ENCODE measurements at regions of chr1 and their contacts with region 1.

Region 1: DNA sequence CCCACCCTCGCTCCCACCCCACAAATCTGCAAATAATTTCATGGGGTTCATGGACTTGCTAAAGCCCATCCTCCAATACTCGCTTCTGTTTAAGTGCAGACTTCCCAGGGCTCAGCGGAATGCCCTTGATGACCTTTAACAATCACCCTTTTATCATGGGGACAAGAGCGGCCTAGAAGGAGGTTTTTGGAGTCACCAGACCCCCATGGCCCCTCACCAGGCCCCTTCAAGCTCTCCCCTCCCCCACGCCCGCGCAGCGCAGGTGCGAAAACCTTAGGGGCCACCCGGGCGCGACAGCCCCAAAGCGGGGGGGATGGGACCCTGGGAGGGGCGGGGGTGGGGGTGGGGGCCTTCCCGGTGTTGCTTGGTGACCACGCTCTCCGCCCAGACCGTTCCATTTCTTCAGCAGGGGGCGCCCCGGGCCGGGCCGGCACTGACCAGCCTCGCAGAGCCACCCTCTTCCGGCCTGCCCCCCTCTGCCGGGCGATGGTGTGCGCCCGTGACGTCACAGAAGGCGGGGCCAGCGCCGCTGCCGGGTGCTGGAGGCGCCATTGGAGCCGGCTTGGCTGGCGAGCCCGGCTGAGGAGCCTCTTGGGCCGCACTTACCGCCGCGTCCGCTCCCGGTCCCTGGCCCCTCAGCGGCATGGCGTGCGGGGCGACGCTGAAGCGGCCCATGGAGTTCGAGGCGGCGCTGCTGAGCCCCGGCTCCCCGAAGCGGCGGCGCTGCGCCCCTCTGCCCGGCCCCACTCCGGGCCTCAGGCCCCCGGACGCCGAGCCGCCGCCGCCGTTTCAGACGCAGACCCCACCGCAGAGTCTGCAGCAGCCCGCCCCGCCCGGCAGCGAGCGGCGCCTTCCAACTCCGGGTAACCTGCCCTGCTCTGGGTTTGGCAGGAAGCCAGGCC is at the start of gene AKIRIN1:
- DNase-seq: peak; percentile 94
- H3K4me3 ChIP-seq: peak within 1 kb of the TSS; percentile 69 to 83 (median 72)
- H3K27ac ChIP-seq: peak within 1 kb of the TSS; percentile 61
- H3K4me1 ChIP-seq: peaks cover 28% of the 10 kb centered on the region
- H3K27me3 ChIP-seq: no peaks in the 10 kb centered on the region
- CTCF ChIP-seq: no peak
- total RNA-seq, gene AKIRIN1: 62.8 to 63.5 TPM

Region 2: DNA sequence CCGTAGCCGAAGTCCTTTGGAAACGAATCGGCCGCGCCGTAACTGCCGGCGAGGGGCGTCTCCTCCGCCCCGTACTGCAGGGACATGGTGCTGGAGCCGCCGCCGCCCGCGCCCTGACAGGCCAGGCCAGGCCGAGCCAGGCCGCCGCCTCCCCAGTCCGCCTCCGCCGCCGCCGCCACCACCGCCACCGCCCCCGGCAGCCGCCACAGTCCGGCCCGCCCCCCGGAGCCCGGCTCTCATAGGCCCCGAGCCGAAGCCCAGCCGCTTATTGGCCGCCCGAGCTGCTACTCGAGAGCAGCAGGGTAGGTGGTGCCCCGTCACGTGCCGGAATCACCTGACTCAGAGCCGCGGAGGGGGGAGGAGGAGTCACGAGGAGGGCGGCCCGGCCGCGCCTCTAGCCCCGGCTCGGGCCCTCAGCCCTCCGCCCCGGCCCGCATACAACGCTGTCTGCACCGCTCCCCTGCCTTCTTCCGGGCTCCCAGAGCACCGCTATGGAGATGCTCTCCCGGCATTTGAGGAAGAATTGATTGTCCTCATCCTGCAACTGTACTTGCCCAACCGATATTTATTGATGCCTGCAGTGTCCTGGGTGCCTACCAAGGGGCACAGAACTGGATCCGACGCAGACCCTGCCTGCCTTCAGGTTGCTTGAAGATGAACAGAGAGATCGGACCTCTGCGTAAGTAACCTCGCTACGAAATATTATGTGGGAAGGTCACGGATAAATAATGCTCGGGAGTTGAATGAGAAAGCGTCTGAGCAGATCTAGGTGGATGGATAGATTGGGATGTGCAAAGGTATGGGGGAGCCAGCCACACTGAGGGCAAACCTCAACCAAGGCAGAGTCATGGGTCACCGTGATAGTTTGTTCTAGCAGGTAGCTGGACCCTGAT is 131.2 kb before region 1 on chr1 and contains the start of gene RRAGC:
- CTCF ChIA-PET with region 1: no interaction called
- dilution Hi-C with region 1: no loop called
- in situ Hi-C with region 1: loop called in 1 of 2 experiments (anchors 10 kb)
- intact Hi-C with region 1: loop called (anchors 1 kb)
- DNase-seq: peak; percentile 98
- H3K4me3 ChIP-seq: peak within 1 kb of the TSS; percentile 84 to 89 (median 87)
- H3K27ac ChIP-seq: peak within 1 kb of the TSS; percentile 89
- H3K4me1 ChIP-seq: peaks cover 12% of the 10 kb centered on the region
- H3K27me3 ChIP-seq: no peaks in the 10 kb centered on the region
- CTCF ChIP-seq: no peak
- total RNA-seq, gene RRAGC: 21.8 to 36.9 TPM

Region 3: DNA sequence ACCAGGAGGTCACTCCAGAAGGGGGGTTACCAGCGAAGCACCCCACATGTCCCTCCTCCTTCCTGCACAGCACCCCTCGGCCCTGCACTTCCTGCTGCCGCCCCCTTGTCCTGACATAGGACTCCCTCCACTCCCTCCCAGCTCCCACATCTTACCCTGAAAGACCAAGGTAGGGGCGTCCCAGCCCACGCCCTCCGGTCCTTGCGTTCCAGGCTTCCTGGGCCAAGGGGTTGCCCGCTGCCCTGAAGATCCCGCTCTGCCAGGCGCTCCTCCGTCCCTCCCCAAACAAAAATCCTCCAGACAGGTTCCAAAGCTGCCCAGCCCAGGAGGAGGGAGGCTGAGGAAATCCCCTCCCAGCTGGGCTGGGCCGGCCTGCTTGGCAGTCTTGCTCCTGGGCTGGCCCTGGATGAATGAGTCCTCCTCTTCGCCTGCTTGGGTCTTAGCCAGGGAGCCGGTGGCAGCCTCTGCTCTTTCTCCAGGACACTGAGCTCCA is 49.4 kb before region 1 on chr1 and contains the start of gene RHBDL2:
- CTCF ChIA-PET with region 1: no interaction called
- dilution Hi-C with region 1: no loop called
- in situ Hi-C with region 1: no loop called
- intact Hi-C with region 1: loop called (anchors 2 kb)
- DNase-seq: peak; percentile 86
- H3K4me3 ChIP-seq: peak within 1 kb of the TSS; percentile 48 to 92 (median 70)
- H3K27ac ChIP-seq: peak within 1 kb of the TSS; percentile 33
- H3K4me1 ChIP-seq: peaks cover 13% of the 10 kb centered on the region
- H3K27me3 ChIP-seq: no peaks in the 10 kb centered on the region
- CTCF ChIP-seq: no peak
- total RNA-seq, gene RHBDL2: 0.67 to 7.5 TPM

Region 4: DNA sequence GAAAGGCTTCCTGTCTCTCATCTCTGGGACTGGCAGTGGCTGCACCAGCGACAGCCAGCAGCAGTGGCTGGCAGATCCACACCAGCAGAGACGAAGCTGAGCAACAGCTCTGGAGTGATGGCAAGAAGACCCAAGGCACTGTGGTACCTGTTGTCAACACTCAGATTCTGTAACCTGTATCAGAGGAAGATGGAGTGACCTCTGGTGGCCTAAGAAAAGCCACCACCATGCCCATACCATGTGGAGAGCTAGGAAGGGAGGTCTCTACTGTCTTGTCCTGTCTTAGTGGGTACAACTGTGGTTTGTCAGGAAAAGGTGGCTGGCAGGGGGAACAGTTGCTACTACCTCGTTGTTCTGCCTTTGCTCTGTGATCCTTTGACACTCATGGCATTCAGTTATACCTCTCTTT is 26.8 kb before region 1 on chr1:
- CTCF ChIA-PET with region 1: no interaction called
- dilution Hi-C with region 1: no loop called
- in situ Hi-C with region 1: no loop called
- intact Hi-C with region 1: loop called (anchors 2 kb)
- DNase-seq: no peak
- H3K4me3 ChIP-seq: no peak overlapping the region
- H3K27ac ChIP-seq: no peak overlapping the region
- H3K4me1 ChIP-seq: peaks cover 34% of the 10 kb centered on the region
- H3K27me3 ChIP-seq: no peaks in the 10 kb centered on the region
- CTCF ChIP-seq: peak; percentile 19 to 51

Region 5: DNA sequence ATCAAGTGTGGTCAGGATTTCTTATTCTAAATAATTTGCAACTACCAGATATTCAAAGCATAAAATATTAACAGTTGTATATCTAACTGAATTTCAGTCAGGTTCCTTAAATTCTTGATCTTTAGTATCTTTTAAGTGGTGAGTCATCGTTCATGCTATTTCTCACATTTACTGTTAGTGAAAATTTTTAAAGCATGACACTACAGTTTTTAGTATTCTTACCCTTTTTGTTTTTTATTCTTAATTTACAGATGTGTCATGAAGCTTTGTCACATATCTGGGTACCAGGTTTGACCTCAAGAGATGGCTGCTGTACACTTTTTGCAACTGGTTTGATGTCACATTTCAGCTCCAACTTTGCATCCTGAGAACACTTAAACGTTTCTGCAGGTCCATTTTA is 12.8 kb after region 1 on chr1:
- CTCF ChIA-PET with region 1: no interaction called
- dilution Hi-C with region 1: no loop called
- in situ Hi-C with region 1: no loop called
- intact Hi-C with region 1: no loop called
- DNase-seq: no peak
- H3K4me3 ChIP-seq: no peak overlapping the region
- H3K27ac ChIP-seq: no peak overlapping the region
- H3K4me1 ChIP-seq: peaks cover 9% of the 10 kb centered on the region
- H3K27me3 ChIP-seq: no peaks in the 10 kb centered on the region
- CTCF ChIP-seq: no peak